ENCODE measurements at regions of chr2 and their contacts with region 1.

Region 1: GRCh38 chr2:12716282-12717190 is at the start of gene TRIB2:
- DNase-seq: peak; percentile 96
- H3K4me3 Mint-ChIP-seq: peak within 1 kb of the TSS; percentile 92
- H3K27ac Mint-ChIP-seq: peak within 1 kb of the TSS; percentile 90
- H3K4me1 Mint-ChIP-seq: peaks cover 54% of the 10 kb centered on the region
- H3K27me3 Mint-ChIP-seq: peaks cover 5% of the 10 kb centered on the region
- total RNA-seq, gene TRIB2: 4.0 and 5.1 TPM in 2 replicates

Region 2: GRCh38 chr2:11688222-11689069 is 1028.1 kb before region 1 on chr2:
- intact Hi-C with region 1: loop called (anchors 10 kb)
- DNase-seq: peak; percentile 96
- H3K4me3 Mint-ChIP-seq: peak overlapping the region; percentile 74
- H3K27ac Mint-ChIP-seq: peak overlapping the region; percentile 23
- H3K4me1 Mint-ChIP-seq: peaks cover 15% of the 10 kb centered on the region
- H3K27me3 Mint-ChIP-seq: peaks cover 8% of the 10 kb centered on the region

Region 3: DNA sequence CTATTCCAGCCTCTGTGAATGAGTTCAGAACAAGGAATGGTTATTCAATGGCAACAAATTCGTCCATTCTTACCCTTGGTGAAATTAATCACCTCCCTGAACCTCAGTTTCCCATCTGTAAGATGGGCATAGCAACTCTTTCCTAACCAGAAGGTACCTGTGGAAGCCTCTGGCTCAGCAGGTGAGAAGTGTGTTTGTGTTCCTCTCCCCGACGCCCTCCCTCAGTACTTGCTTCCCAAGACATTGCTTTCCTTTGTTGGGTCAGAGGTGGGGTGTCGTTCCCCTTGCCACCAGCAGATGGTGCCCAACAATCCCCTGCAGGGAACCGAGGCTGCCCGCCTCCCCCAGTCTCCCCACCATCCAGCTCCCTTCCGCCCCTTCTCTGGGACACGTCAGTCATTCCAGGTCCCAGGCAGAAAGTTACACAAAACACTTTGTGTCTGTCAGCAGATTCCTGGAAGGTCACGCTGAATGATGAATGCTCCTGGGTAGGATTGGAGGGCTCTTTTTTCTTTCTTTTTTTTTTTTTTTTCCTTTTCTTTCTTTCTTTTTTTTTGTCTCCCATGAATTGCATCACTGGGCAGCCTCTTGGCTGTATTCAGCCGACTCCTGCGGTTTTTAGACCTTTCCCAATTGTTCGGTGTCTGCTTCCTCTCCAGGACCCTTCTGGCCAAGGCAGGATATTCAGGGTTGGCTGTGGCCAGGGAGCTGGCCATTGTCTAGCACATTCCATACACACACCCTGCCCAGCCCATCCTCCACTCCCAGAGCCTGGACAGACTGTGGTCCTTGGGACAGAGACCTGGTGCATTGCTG is 852.8 kb before region 1 on chr2:
- intact Hi-C with region 1: loop called (anchors 2 kb)
- DNase-seq: peak; percentile 89
- H3K4me3 Mint-ChIP-seq: no peak overlapping the region
- H3K27ac Mint-ChIP-seq: no peak overlapping the region
- H3K4me1 Mint-ChIP-seq: peaks cover 9% of the 10 kb centered on the region
- H3K27me3 Mint-ChIP-seq: peaks cover 17% of the 10 kb centered on the region

Region 4: GRCh38 chr2:12176623-12177454 is 539.7 kb before region 1 on chr2:
- intact Hi-C with region 1: loop called (anchors 5 kb)
- DNase-seq: peak; percentile 66
- H3K4me3 Mint-ChIP-seq: peak overlapping the region; percentile 2
- H3K27ac Mint-ChIP-seq: no peak overlapping the region
- H3K4me1 Mint-ChIP-seq: peaks cover 33% of the 10 kb centered on the region
- H3K27me3 Mint-ChIP-seq: peaks cover 7% of the 10 kb centered on the region

Region 5: DNA sequence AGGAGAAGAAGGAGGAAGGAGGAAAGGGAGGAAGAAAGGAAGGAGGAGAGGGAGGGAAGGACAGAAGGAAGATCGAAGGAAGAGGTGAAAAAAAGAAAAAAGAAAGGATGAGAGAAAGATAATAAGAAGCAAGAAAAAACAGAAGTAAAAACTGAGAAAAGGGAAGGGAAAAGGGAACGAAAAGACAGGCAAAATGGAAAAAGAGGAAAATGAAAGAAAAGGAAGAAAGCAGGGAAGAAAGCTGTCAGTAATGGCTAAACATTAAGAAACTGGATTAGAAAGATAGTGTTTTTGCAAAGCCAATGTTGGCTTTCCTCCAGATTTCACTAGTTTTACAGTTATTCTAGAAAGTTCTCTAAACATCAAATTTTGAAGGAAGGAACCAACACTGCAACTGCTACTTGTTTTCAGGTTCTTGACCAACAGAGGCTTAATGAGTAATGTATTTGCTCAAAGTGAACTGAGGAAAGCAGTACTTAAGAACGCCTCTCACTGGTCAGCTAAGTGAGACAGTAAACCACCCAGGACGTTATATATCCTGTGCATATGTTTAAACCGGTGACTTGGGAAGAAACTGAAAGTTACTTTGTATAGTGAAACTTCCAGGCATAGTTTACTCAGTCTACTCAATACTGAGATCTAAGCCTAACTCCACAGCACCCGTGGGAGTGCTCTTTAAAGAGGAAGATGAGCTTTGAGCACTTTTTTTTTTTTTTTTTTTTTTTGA is 286.0 kb before region 1 on chr2:
- intact Hi-C with region 1: loop called (anchors 2 kb)
- DNase-seq: peak; percentile 75
- H3K4me3 Mint-ChIP-seq: peak overlapping the region; percentile 50
- H3K27ac Mint-ChIP-seq: peak overlapping the region; percentile 38
- H3K4me1 Mint-ChIP-seq: peaks cover 23% of the 10 kb centered on the region
- H3K27me3 Mint-ChIP-seq: no peaks in the 10 kb centered on the region

Region 6: DNA sequence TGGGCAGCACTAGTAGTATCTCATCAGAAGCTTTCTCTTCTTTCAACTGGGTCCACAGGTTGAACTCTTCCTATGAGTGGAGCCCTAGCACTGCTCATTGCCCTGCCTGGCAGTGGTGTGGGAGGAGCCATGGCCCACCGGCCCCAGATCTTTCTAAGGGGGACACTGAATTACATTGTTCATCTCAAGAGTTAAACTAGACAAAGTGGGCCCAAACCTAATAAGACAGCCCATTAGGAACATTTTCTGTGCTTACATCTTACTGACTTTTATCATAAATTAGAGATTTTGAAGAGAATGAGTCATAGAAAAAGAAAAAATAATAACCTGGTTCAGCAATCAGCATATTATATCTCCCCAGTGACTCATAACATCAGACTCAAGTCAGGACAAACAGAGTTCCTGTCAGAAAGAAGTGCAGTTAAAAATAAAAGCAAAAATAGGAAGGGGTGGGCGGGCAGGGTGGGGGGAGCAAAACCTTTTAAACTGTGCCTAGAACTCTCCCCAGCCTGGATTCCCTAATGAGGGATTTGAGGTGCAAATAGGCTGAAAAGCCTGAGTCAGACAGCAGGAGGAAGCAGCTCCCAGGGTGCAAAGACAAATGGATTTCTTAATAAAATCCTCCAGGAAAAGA is 161.4 kb before region 1 on chr2:
- intact Hi-C with region 1: loop called (anchors 2 kb)
- DNase-seq: peak; percentile 59
- H3K4me3 Mint-ChIP-seq: peak overlapping the region; percentile 57
- H3K27ac Mint-ChIP-seq: peak overlapping the region; percentile 88
- H3K4me1 Mint-ChIP-seq: peaks cover 39% of the 10 kb centered on the region
- H3K27me3 Mint-ChIP-seq: no peaks in the 10 kb centered on the region

Region 7: DNA sequence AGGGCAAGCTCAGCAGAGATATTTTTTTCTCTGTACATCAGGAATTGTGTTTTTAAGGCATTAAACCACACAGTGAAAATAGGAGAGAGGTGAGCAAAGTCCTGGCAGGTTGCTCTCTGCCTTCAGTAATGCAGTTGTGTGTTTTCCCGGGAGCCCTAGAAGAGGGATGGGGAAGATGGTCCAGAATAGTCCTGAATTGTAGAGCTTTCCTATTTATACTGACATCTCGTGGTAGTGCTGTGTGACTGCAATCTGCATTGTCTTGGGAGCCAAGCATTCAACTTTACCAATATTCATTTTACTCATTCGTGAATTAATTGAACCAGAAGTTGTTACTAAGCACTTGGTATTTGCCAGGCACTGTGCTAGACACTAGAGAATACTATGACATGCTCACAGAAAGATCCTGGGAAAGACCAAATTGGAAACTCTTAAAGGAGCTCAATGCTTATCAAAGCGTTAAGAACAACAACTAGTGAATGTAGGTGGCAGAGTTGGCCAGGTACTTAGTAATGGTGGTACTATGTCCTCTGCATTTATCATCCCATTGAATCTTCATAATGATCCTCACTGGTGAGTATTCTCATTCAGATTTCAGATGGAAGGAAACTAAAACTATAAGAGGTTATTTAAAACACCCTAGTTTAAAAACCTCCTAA is 214.8 kb after region 1 on chr2:
- intact Hi-C with region 1: loop called (anchors 2 kb)
- DNase-seq: peak; percentile 61
- H3K4me3 Mint-ChIP-seq: no peak overlapping the region
- H3K27ac Mint-ChIP-seq: no peak overlapping the region
- H3K4me1 Mint-ChIP-seq: peaks cover 11% of the 10 kb centered on the region
- H3K27me3 Mint-ChIP-seq: peaks cover 49% of the 10 kb centered on the region

Region 8: GRCh38 chr2:13252615-13253014 is 536.1 kb after region 1 on chr2:
- intact Hi-C with region 1: no loop called
- DNase-seq: no peak
- H3K4me3 Mint-ChIP-seq: no peak overlapping the region
- H3K27ac Mint-ChIP-seq: no peak overlapping the region
- H3K4me1 Mint-ChIP-seq: no peaks in the 10 kb centered on the region
- H3K27me3 Mint-ChIP-seq: no peaks in the 10 kb centered on the region